ENCODE measurements at regions of chr7 and their contacts with region 1.

Region 1: DNA sequence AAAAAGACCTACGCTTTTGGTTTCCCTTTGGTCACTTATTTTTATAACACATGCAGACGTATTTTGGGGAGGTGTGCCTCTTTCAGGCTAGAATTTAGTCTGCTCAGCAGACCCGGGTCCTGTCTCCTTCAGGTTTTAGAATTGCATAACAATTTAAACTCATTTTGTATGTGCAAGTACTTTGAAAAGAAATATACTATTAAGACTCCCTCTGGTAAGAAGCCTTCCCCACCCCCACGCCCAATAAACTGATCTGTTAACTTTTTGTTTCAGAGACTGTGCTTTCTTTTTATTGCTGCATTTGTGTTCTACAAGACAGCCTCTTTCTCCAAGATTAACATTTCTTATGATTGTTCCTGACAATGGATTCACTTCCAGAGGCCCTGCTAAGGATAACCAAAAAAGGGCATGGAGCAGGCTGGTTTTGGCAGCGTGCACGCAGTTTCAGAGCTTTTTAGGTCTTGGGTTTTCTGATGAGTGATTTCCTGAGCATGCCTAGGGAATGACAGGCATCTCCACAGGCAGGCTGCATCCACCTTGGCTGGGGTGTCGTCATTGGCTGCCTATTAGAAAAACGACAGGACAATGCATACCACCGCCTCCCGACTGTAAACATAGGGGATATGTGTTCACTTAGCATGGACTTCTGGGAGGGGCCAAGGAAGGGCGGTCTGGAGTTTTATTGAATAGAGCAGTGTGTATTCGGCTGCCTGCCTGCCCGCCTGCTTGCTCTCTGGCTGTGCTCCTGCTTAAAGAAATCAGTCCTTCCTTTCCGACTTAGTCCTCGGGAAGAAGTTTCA is at the start of gene CALD1:
- DNase-seq: peak; percentile 94
- H3K4me3 Mint-ChIP-seq: peak within 1 kb of the TSS; percentile 88
- H3K27ac Mint-ChIP-seq: peak within 1 kb of the TSS; percentile 88
- H3K4me1 Mint-ChIP-seq: peaks cover 36% of the 10 kb centered on the region
- H3K27me3 Mint-ChIP-seq: no peaks in the 10 kb centered on the region
- CTCF ChIP-seq: no peak
- total RNA-seq, gene CALD1: 130 and 183 TPM in 2 replicates

Region 2: DNA sequence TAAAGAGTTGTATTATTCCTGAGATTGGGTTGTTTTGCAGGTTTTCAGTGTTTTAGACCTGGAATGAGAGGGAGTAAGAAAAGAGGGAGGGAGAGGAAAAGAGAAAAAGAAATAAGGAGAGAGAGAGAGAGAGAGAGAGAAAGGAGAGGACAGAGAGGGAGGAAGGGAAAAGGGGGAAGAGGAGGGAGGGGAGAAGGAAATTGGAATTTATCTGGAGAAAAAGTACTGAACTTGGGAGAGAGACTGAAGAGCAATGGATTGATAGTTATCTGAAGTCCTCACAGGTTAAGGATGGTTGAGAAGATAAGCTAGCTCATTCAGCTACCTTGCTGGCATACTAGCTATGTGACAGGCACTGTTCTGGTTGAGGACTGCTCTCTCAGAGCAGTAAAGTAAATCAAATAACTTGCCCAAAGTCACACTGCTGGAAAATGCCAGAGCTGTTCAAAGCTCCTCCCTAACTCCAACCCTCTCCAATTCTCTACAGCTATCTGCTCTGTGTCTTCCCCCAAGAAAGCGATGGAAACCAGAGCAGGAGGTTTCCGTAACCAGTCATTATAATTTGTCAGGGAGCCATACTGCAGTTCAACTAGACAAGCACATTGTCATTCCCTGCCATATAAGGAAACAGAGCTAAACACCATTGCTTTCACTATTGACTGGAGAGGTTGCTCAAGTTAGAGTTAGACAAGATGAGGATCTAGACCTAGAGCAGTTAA is 11.0 kb after region 1 on chr7:
- CTCF ChIA-PET with region 1: interaction called, 5 read pairs
- POLR2A ChIA-PET with region 1: interaction called, 13 read pairs
- intact Hi-C with region 1: no loop called
- DNase-seq: no peak
- H3K4me3 Mint-ChIP-seq: no peak overlapping the region
- H3K27ac Mint-ChIP-seq: no peak overlapping the region
- H3K4me1 Mint-ChIP-seq: peaks cover 6% of the 10 kb centered on the region
- H3K27me3 Mint-ChIP-seq: no peaks in the 10 kb centered on the region
- CTCF ChIP-seq: no peak

Region 3: DNA sequence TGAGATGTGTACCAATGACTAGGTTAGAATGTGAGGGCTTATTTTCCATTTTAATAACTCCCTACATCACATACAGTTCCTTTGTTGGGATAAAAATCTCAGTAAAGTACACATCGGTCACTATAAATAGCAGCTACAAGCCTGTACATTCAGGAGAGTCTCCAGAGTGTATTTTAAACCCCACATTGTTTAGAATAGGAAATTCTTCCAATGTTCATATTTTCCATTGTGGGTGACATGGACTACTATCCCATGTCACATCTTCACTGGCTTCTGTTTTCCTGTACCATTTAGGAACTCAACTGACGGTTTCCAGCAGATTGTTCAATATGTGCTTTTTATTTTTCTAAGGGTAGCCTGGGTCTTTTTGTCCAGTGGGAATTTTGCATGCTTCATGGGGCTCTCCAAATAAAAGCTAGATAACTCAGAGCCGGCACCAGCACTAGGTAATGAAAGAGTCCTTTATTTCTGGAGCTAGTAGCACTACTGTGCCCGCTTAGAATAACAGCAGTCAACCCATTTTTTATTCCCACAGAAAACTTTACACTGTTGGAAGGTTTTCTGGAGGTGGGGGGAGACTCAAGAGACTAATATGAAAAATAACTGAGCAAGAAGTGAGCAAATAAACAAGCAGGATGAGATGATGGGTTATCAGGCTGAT is 100.8 kb after region 1 on chr7:
- CTCF ChIA-PET with region 1: no interaction called
- POLR2A ChIA-PET with region 1: no interaction called
- intact Hi-C with region 1: no loop called
- DNase-seq: no peak
- H3K4me3 Mint-ChIP-seq: no peak overlapping the region
- H3K27ac Mint-ChIP-seq: no peak overlapping the region
- H3K4me1 Mint-ChIP-seq: peaks cover 5% of the 10 kb centered on the region
- H3K27me3 Mint-ChIP-seq: no peaks in the 10 kb centered on the region
- CTCF ChIP-seq: no peak

Region 4: GRCh38 chr7:134891262-134891695 is 112.1 kb after region 1 on chr7:
- CTCF ChIA-PET with region 1: no interaction called
- POLR2A ChIA-PET with region 1: interaction called, 12 read pairs
- intact Hi-C with region 1: loop called (anchors 5 kb)
- DNase-seq: peak; percentile 99
- H3K4me3 Mint-ChIP-seq: peak overlapping the region; percentile 73
- H3K27ac Mint-ChIP-seq: peak overlapping the region; percentile 75
- H3K4me1 Mint-ChIP-seq: peaks cover 58% of the 10 kb centered on the region
- H3K27me3 Mint-ChIP-seq: no peaks in the 10 kb centered on the region
- CTCF ChIP-seq: no peak

Region 5: GRCh38 chr7:135177021-135177696 is 398.0 kb after region 1 on chr7:
- CTCF ChIA-PET with region 1: no interaction called
- POLR2A ChIA-PET with region 1: no interaction called
- intact Hi-C with region 1: no loop called
- DNase-seq: peak; percentile 95
- H3K4me3 Mint-ChIP-seq: peak overlapping the region; percentile 16
- H3K27ac Mint-ChIP-seq: peak overlapping the region; percentile 91
- H3K4me1 Mint-ChIP-seq: peaks cover 36% of the 10 kb centered on the region
- H3K27me3 Mint-ChIP-seq: no peaks in the 10 kb centered on the region
- CTCF ChIP-seq: no peak

Region 6: DNA sequence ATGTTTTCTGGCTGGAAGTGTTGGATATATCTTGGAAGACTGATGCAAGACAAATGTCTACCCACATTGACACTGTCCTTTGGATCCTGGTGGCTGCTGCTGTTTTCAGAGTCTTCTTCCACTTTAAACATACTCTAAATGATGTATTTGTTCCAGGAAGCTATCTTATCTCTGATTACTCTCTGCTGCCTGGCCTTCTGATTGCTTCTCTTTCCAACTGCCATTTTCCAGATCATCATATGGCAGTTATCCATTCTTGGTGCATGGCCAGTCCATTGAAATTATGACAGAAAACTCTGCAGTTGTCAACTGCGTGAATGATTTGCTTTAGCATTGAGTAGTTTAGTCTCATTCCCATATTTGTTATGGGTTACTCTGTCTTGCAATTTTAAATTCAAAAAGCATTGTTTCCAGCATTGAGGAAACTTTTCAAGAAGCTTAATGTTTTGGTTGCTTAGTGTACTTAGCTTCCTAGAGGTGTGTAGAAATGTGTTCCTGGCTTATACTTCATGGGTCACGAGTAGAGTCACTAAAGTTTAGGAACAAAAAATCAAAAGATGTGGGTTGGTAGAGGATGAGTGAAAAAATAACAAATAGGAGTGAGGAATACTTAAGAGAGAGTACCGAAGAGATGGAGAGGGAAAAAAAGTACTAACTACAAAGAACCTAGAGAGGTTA is 1466.3 kb after region 1 on chr7:
- CTCF ChIA-PET with region 1: no interaction called
- POLR2A ChIA-PET with region 1: no interaction called
- intact Hi-C with region 1: no loop called
- DNase-seq: no peak
- H3K4me3 Mint-ChIP-seq: no peak overlapping the region
- H3K27ac Mint-ChIP-seq: no peak overlapping the region
- H3K4me1 Mint-ChIP-seq: no peaks in the 10 kb centered on the region
- H3K27me3 Mint-ChIP-seq: peaks cover 10% of the 10 kb centered on the region
- CTCF ChIP-seq: no peak